IMR-90 (cell line): ENCODE measurements at regions of chr6 and their contacts with region 1.

Region 1: DNA sequence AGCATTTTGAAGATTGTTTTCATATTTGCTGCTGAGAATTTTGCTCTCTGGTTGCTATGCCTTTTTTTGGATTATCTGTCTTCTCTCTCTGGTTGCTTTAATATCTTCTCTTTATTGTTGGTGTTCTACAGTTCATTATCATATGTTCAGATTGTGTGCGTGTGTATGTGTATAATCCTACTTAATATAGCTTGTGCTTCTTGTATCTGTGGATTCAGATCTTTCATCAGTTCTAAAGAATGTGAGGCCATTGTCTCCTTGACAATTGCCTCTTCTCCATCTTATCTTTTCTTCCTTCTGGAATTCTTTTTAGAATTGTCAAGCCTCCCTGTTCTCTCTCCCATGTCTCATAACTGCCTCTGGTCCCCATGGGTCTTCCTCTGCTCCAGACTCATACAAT is 195.4 kb downstream of the CDC5L start:
- DNase-seq: no peak
- ATAC-seq: no peak
- H3K4me3 ChIP-seq: no peak overlapping the region
- H3K27ac ChIP-seq: no peak overlapping the region
- H3K4me1 ChIP-seq: no peaks in the 10 kb centered on the region
- H3K27me3 ChIP-seq: peaks cover 8% of the 10 kb centered on the region
- CTCF ChIP-seq: no peak
- POLR2A ChIP-seq: no peak
- RAD21 ChIP-seq: no peak

Region 2: DNA sequence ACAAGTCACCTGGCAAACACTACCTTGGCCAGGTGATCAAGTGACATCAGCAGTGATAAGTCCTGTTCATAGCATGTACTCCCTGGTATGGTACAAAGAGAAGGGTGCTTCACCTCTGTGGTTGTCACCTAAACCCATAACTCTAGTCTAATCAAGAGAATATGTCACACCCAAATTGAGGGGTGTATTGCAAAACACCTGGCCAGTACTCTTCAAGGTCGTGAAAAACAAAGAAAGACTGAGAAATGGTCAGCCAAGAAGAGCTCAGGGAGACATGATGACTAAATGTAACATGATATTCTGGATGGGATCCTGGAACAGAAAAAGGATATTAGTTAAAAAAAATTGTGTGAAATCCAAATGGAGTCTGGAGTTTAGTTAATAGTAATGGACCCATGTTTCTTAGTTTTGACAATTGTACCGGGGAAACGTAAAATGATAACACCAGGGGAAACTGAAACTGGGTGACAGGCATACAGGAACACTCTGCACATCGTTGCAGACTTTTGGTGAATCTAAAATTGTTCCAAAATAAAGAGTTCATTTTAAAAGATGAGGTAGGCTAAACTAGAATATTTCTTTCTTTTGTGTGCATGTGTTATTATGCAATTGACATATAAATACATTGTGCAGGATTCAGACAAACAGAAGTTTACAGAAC is 66.6 kb after region 1 on chr6:
- CTCF ChIA-PET with region 1: no interaction called
- POLR2A ChIA-PET with region 1: no interaction called
- dilution Hi-C with region 1: no loop called
- in situ Hi-C with region 1: no loop called
- intact Hi-C with region 1: loop called (anchors 2 kb)
- DNase-seq: peak; percentile 61
- ATAC-seq: peak; percentile 44
- H3K4me3 ChIP-seq: no peak overlapping the region
- H3K27ac ChIP-seq: no peak overlapping the region
- H3K4me1 ChIP-seq: peaks cover 5% of the 10 kb centered on the region
- H3K27me3 ChIP-seq: no peaks in the 10 kb centered on the region; the same call in 1 of the 2 replicates
- CTCF ChIP-seq: no peak
- POLR2A ChIP-seq: no peak
- RAD21 ChIP-seq: no peak

Region 3: GRCh38 chr6:44917430-44917829 is 334.5 kb after region 1 on chr6:
- CTCF ChIA-PET with region 1: no interaction called
- POLR2A ChIA-PET with region 1: no interaction called
- dilution Hi-C with region 1: no loop called
- in situ Hi-C with region 1: no loop called
- intact Hi-C with region 1: no loop called
- DNase-seq: peak; percentile 19
- ATAC-seq: no peak
- H3K4me3 ChIP-seq: no peak overlapping the region
- H3K27ac ChIP-seq: no peak overlapping the region
- H3K4me1 ChIP-seq: no peaks in the 10 kb centered on the region
- H3K27me3 ChIP-seq: no peaks in the 10 kb centered on the region
- CTCF ChIP-seq: no peak
- POLR2A ChIP-seq: no peak
- RAD21 ChIP-seq: no peak